ENCODE measurements at regions of chr17 and their contacts with region 1.

Region 1: DNA sequence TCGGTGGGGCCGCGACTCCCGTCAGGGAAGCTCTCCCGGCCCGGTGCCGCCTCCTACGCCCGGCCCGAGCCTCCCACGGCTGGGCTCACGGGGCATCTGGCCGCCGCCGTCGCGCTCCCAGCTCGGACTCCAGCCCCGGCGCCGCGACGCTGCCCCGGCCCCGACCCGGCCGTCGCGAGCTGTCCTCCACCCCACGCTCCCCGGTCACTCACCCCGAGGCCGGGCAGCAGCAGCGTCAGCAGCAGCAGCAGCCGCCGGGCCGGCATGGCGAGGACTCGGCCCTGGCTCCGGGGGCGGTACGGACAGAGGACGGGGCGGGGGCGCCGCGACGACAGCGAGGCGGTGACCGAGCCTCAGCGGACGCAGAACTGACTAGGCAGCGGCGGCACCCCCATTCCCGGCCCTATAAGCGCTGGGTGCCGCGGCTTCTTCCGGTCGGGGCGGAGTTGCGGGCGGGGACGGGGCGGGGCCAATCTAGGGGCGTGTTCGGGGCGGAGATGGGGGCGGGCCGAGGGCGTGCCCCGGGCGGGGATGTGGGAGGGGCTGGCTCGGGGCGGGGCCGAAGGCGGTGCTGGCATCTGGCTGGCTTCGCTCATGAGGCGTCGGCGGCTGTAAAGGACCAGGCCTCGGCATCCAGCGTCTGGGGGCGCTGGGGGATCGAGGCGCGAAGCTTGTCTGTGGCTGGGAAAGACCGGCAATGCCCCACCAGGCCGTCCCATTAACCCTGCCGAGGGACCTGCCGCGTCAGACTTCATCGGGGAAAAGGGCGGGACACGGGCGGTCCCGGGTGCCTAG is at the start of gene ERN1:
- DNase-seq: peak; percentile 83 to 96 (median 90)
- ATAC-seq: peak; percentile 90
- H3K4me3 ChIP-seq: peak within 1 kb of the TSS; percentile 70 to 76
- H3K4me3 Mint-ChIP-seq: peak within 1 kb of the TSS; percentile 89
- H3K27ac ChIP-seq: peak within 1 kb of the TSS; percentile 82 to 96
- H3K27ac Mint-ChIP-seq: peak within 1 kb of the TSS; percentile 97
- H3K4me1 ChIP-seq: peaks cover 23% of the 10 kb centered on the region
- H3K4me1 Mint-ChIP-seq: peaks cover 46% of the 10 kb centered on the region
- H3K27me3 ChIP-seq: no peaks in the 10 kb centered on the region
- H3K27me3 Mint-ChIP-seq: no peaks in the 10 kb centered on the region
- CTCF ChIP-seq: no peak
- total RNA-seq, gene ERN1: 57.1 to 64.0 TPM

Region 2: GRCh38 chr17:63842540-63843386 is 287.2 kb before region 1 on chr17 and contains the start of gene SMARCD2:
- CTCF ChIA-PET with region 1: no interaction called
- POLR2A ChIA-PET with region 1: no interaction called
- intact Hi-C with region 1: loop called (anchors 1 to 2 kb)
- DNase-seq: peak; percentile 99
- ATAC-seq: peak; percentile 91
- H3K4me3 ChIP-seq: peak within 1 kb of the TSS; percentile 86 to 95
- H3K4me3 Mint-ChIP-seq: peak within 1 kb of the TSS; percentile 92
- H3K27ac ChIP-seq: peak within 1 kb of the TSS; percentile 88 to 95
- H3K27ac Mint-ChIP-seq: peak within 1 kb of the TSS; percentile 92
- H3K4me1 ChIP-seq: peaks cover 43% of the 10 kb centered on the region
- H3K4me1 Mint-ChIP-seq: peaks cover 30% of the 10 kb centered on the region
- H3K27me3 ChIP-seq: no peaks in the 10 kb centered on the region
- H3K27me3 Mint-ChIP-seq: no peaks in the 10 kb centered on the region
- CTCF ChIP-seq: no peak
- total RNA-seq, gene SMARCD2: 121 TPM

Region 3: GRCh38 chr17:63931099-63931561 is 198.8 kb before region 1 on chr17:
- CTCF ChIA-PET with region 1: interaction called, 12 read pairs
- POLR2A ChIA-PET with region 1: interaction called, 3 read pairs
- intact Hi-C with region 1: no loop called
- DNase-seq: peak in 8 of 9 experiments; percentile 53 to 79 (median 66)
- ATAC-seq: peak; percentile 81
- H3K4me3 ChIP-seq: peak overlapping the region; percentile 48 to 58
- H3K4me3 Mint-ChIP-seq: peak overlapping the region; percentile 93
- H3K27ac ChIP-seq: peak overlapping the region; percentile 36 to 50
- H3K27ac Mint-ChIP-seq: peak overlapping the region; percentile 94
- H3K4me1 ChIP-seq: peaks cover 20% of the 10 kb centered on the region
- H3K4me1 Mint-ChIP-seq: peaks cover 27% of the 10 kb centered on the region
- H3K27me3 ChIP-seq: no peaks in the 10 kb centered on the region
- H3K27me3 Mint-ChIP-seq: no peaks in the 10 kb centered on the region
- CTCF ChIP-seq: no peak

Region 4: GRCh38 chr17:64025732-64026294 is 104.1 kb before region 1 on chr17:
- CTCF ChIA-PET with region 1: interaction called, 455 read pairs
- POLR2A ChIA-PET with region 1: interaction called, 89 read pairs
- intact Hi-C with region 1: loop called (anchors 1 kb)
- DNase-seq: peak; percentile 85 to 98 (median 94)
- ATAC-seq: peak; percentile 84
- H3K4me3 ChIP-seq: peak overlapping the region; percentile 19 to 37
- H3K4me3 Mint-ChIP-seq: peak overlapping the region; percentile 80
- H3K27ac ChIP-seq: peak overlapping the region; percentile 68 to 92
- H3K27ac Mint-ChIP-seq: peak overlapping the region; percentile 98
- H3K4me1 ChIP-seq: peaks cover 53% of the 10 kb centered on the region
- H3K4me1 Mint-ChIP-seq: peaks cover 58% of the 10 kb centered on the region
- H3K27me3 ChIP-seq: no peaks in the 10 kb centered on the region
- H3K27me3 Mint-ChIP-seq: no peaks in the 10 kb centered on the region
- CTCF ChIP-seq: peak; percentile 94

Region 5: DNA sequence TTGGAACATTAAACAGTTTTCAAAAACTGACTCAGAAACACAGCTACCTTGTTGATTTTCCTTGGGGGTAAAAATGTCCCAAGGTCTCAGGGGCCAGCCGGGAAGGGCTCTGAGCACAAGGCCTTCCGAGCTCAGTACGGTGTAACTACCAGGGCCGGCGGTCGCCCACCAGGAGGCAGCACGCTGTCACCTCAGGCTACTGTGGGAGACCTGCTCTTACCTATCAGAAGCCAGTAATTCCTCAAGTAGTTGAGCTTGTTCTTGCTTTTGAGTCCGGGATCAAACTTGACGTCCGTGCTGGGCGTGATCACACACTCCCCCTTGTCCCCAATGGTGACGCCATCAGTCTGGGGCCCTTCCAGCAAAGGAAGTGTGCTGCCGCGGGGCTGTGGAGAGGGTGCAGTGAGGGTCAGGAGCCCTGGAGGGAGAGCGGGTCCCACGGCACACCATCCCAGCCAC is 66.2 kb before region 1 on chr17:
- CTCF ChIA-PET with region 1: interaction called, 220 read pairs
- POLR2A ChIA-PET with region 1: interaction called, 18 read pairs
- intact Hi-C with region 1: loop called (anchors 1 kb)
- DNase-seq: peak; percentile 20 to 73 (median 56)
- ATAC-seq: peak; percentile 54
- H3K4me3 ChIP-seq: no peak overlapping the region
- H3K4me3 Mint-ChIP-seq: peak overlapping the region; percentile 76
- H3K27ac ChIP-seq: peak overlapping the region in 1 of 2 experiments; percentile 58
- H3K27ac Mint-ChIP-seq: peak overlapping the region; percentile 86
- H3K4me1 ChIP-seq: peaks cover 32% of the 10 kb centered on the region
- H3K4me1 Mint-ChIP-seq: peaks cover 75% of the 10 kb centered on the region
- H3K27me3 ChIP-seq: no peaks in the 10 kb centered on the region
- H3K27me3 Mint-ChIP-seq: no peaks in the 10 kb centered on the region
- CTCF ChIP-seq: peak; percentile 33

Region 6: DNA sequence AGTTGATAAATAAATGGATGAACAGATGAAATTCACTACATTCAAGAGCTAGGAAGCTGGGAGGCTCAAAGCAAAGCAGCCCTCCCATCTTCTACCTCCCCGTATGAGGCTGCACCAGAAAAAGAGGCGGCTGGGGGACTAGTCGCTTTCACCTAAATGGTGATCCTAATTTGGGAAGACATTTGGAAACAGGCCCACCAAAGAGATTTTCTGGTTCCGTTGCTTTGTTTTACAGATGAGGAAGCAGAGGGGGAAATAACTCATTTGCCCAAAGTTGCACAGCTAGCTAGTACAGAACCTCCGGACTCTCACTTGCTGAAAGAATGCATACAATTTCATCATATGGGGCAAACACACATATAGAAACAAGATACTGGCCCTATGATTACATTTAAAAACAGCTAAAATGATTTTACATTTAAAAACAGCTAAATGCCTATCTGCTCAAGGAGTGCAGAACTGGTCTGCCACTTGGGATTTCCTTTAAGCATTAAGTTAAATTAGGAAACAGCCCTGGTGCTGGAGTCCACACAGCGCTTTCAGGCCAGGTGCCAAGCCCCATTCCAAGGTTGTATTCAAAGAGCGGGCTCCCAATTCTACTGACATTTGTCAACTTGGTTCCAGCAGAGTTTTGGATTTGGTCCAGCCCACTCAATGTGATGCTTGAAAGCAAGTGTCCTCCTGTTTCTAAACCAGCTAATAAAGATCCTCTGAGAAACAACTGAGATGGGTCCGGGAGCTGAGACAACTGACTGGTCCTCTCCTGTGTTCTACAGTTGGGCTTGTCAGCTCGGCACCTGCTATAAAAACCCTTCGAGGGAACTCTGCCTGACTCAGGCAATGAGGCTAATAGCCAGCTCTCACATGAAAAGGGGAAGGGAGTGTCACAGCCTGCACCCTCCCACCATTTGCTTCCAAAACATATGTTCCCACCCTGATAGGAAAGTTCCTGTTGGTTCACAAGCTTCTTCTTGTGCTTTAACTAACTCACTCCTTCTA is 11.7 kb before region 1 on chr17:
- CTCF ChIA-PET with region 1: interaction called, 29 read pairs
- POLR2A ChIA-PET with region 1: interaction called, 7 read pairs
- intact Hi-C with region 1: no loop called
- DNase-seq: peak in 1 of 9 experiments; percentile 36
- ATAC-seq: no peak
- H3K4me3 ChIP-seq: no peak overlapping the region
- H3K4me3 Mint-ChIP-seq: no peak overlapping the region
- H3K27ac ChIP-seq: no peak overlapping the region
- H3K27ac Mint-ChIP-seq: no peak overlapping the region
- H3K4me1 ChIP-seq: peaks cover 15% of the 10 kb centered on the region
- H3K4me1 Mint-ChIP-seq: peaks cover 60% of the 10 kb centered on the region
- H3K27me3 ChIP-seq: no peaks in the 10 kb centered on the region
- H3K27me3 Mint-ChIP-seq: no peaks in the 10 kb centered on the region
- CTCF ChIP-seq: no peak

Region 7: GRCh38 chr17:64431534-64431933 is 301.6 kb after region 1 on chr17:
- CTCF ChIA-PET with region 1: no interaction called
- POLR2A ChIA-PET with region 1: no interaction called
- intact Hi-C with region 1: no loop called
- DNase-seq: no peak
- ATAC-seq: no peak
- H3K4me3 ChIP-seq: no peak overlapping the region
- H3K4me3 Mint-ChIP-seq: no peak overlapping the region
- H3K27ac ChIP-seq: no peak overlapping the region
- H3K27ac Mint-ChIP-seq: no peak overlapping the region
- H3K4me1 ChIP-seq: no peaks in the 10 kb centered on the region
- H3K4me1 Mint-ChIP-seq: no peaks in the 10 kb centered on the region
- H3K27me3 ChIP-seq: peaks cover 0 to 3% of the 10 kb centered on the region in 2 experiments
- H3K27me3 Mint-ChIP-seq: peaks cover 2% of the 10 kb centered on the region
- CTCF ChIP-seq: no peak